MCF 10A (cell line): ENCODE measurements at regions of chr18 and their contacts with region 1.

Region 1: GRCh38 chr18:12236934-12237832 is 17.0 kb upstream of the CIDEA start:
- DNase-seq: peak; percentile 65
- H3K4me3 Mint-ChIP-seq: no peak overlapping the region
- H3K27ac Mint-ChIP-seq: no peak overlapping the region
- H3K4me1 Mint-ChIP-seq: peaks cover 7% of the 10 kb centered on the region
- H3K27me3 Mint-ChIP-seq: peaks cover 21% of the 10 kb centered on the region
- CTCF ChIP-seq: peak; percentile 88

Region 2: GRCh38 chr18:12074736-12075135 is 162.4 kb before region 1 on chr18:
- CTCF ChIA-PET with region 1: interaction called, 9 read pairs
- POLR2A ChIA-PET with region 1: no interaction called
- intact Hi-C with region 1: loop called (anchors 2 kb)
- DNase-seq: peak; percentile 6
- H3K4me3 Mint-ChIP-seq: no peak overlapping the region
- H3K27ac Mint-ChIP-seq: no peak overlapping the region
- H3K4me1 Mint-ChIP-seq: peaks cover 4% of the 10 kb centered on the region
- H3K27me3 Mint-ChIP-seq: no peaks in the 10 kb centered on the region
- CTCF ChIP-seq: no peak

Region 3: GRCh38 chr18:12092398-12093229 is 144.6 kb before region 1 on chr18:
- CTCF ChIA-PET with region 1: interaction called, 30 read pairs
- POLR2A ChIA-PET with region 1: interaction called, 3 read pairs
- intact Hi-C with region 1: loop called (anchors 1 kb)
- DNase-seq: peak; percentile 24
- H3K4me3 Mint-ChIP-seq: no peak overlapping the region
- H3K27ac Mint-ChIP-seq: no peak overlapping the region
- H3K4me1 Mint-ChIP-seq: peaks cover 9% of the 10 kb centered on the region
- H3K27me3 Mint-ChIP-seq: no peaks in the 10 kb centered on the region
- CTCF ChIP-seq: no peak

Region 4: GRCh38 chr18:12656938-12657683 is 419.9 kb after region 1 on chr18:
- CTCF ChIA-PET with region 1: no interaction called
- POLR2A ChIA-PET with region 1: no interaction called
- intact Hi-C with region 1: no loop called
- DNase-seq: no peak
- H3K4me3 Mint-ChIP-seq: peak overlapping the region; percentile 86
- H3K27ac Mint-ChIP-seq: peak overlapping the region; percentile 81
- H3K4me1 Mint-ChIP-seq: peaks cover 38% of the 10 kb centered on the region
- H3K27me3 Mint-ChIP-seq: no peaks in the 10 kb centered on the region
- CTCF ChIP-seq: no peak